ENCODE measurements at regions of chr4 and their contacts with region 1.

Region 1: DNA sequence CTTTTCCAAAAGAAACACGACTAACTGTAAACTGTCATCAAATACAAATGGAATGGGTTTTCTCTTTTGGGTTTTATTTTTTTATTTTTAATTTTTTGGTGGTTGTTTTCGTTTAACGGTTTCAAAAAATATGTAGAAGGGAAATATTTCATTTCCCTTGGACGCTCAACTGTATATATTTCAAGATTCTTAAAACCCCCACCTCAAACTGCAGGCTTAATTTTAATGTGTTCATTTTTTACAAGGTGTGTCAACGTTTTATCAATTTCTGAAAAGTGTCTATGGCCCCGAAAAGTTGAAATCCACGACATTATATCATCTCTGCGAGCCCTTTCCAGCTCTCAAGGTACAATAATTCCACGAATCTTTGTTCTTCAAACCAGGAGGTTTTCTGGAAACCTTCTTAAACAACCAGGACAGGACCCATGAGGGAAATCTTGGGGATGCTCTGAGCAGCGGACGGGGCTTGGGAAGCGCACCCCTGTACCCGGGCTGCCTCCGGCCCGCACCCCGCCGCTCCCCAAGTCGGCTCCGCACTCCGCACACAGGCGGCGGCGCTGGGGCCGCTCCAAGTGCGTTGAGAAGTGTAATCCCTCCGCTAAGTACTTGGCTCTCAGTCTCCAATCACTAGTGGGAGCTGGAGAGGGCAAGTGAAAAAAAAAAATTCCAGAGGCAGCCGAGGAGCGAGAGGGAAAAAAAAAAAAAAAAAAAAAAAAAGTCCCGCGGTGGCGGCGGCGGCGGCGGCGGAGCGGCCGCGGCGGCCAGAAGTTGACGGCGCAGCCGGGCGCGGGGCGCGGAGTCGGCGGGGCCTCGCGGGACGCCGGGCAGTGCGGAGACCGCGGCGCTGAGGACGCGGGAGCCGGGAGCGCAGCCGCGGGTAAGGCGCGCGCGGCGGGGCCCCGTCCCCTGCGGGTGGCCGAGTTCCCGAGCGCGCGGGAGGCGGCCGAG is at the start of gene BMPR1B:
- DNase-seq: no peak
- ATAC-seq: peak; percentile 24 to 64 (median 46)
- H3K4me3 ChIP-seq: peak within 1 kb of the TSS; percentile 75
- H3K27ac ChIP-seq: no peak within 1 kb of the TSS
- H3K4me1 ChIP-seq: no peaks in the 10 kb centered on the region
- H3K27me3 ChIP-seq: peaks cover 0 to 21% (median 0%) of the 10 kb centered on the region in 3 donors
- CTCF ChIP-seq: peak; percentile 7
- total RNA-seq, gene BMPR1B: 1.0 to 13.0 (median 8.1) TPM

Region 2: GRCh38 chr4:94870146-94870545 is 112.7 kb after region 1 on chr4:
- intact Hi-C with region 1: no loop called
- DNase-seq: no peak
- ATAC-seq: no peak
- H3K4me3 ChIP-seq: no peak overlapping the region
- H3K27ac ChIP-seq: no peak overlapping the region
- H3K4me1 ChIP-seq: no peaks in the 10 kb centered on the region
- H3K27me3 ChIP-seq: no peaks in the 10 kb centered on the region
- CTCF ChIP-seq: no peak

Region 3: DNA sequence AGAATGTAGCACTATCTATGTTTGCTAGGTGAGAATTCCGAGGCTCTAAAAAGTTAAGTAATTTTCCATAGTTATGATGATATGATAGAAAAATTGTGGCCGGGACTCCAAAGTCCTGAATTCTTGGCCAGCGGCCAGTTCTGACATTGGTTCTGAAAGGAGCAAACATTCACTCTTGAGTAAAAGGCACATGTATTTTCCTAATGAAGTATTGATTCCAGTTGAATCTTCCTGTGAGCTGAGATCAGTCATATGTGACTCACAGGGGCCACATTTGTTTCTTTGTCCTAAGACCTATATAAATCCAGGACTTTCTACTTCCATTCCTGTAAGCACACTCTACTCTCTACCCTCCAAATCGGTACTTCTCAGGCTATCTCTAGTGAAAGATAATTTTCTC is 350.2 kb after region 1 on chr4:
- intact Hi-C with region 1: loop called in 1 of 2 experiments (anchors 10 kb)
- DNase-seq: peak in 1 of 2 donors; percentile 19
- ATAC-seq: no peak
- H3K4me3 ChIP-seq: no peak overlapping the region
- H3K27ac ChIP-seq: no peak overlapping the region
- H3K4me1 ChIP-seq: no peaks in the 10 kb centered on the region
- H3K27me3 ChIP-seq: no peaks in the 10 kb centered on the region
- CTCF ChIP-seq: no peak